Activated CD4-positive, alpha-beta T cell treated with anti-CD3 and anti-CD28 coated beads, Interleukin-2, amount 10 ng/mL, durations not matched to agents 24 days and 14 days (primary cell): ENCODE measurements at regions of chr11 and their contacts with region 1.

Region 1: GRCh38 chr11:33329705-33330329 is 72.6 kb downstream of the HIPK3 start:
- DNase-seq: peak; percentile 80
- H3K4me3 Mint-ChIP-seq: no peak overlapping the region
- H3K27ac Mint-ChIP-seq: no peak overlapping the region
- H3K4me1 Mint-ChIP-seq: peaks cover 4% of the 10 kb centered on the region
- H3K27me3 Mint-ChIP-seq: no peaks in the 10 kb centered on the region

Region 2: DNA sequence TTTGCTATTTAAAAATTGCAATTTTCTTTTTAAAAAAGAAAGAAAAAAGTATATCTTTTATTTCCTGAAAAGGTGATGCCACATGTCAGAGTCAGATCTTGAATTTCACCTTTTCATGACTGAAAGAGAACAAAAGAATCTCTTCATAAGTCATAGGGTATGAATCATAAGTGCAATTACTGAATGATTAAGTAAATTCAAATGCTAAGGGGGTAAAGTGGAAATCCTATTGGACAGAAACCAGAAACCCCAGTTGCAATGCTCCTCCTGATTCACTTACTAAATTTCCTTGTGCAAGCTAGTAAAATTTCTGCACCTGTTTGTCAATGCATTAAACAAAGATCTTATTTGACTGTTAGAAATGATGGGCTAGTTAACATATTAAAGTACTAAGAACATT is 508.3 kb before region 1 on chr11:
- intact Hi-C with region 1: loop called (anchors 10 kb)
- DNase-seq: no peak
- H3K4me3 Mint-ChIP-seq: peak overlapping the region; percentile 17
- H3K27ac Mint-ChIP-seq: peak overlapping the region; percentile 13
- H3K4me1 Mint-ChIP-seq: peaks cover 8% of the 10 kb centered on the region
- H3K27me3 Mint-ChIP-seq: no peaks in the 10 kb centered on the region